Upper lobe of right lung (tissue), 1 donor: ENCODE measurements at regions of chr2 and their contacts with region 1.

Region 1: GRCh38 chr2:101823347-101823791 is 125.9 kb downstream of the MAP4K4 start:
- DNase-seq: no peak
- ATAC-seq: peak; percentile 93
- H3K4me3 ChIP-seq: no peak overlapping the region
- H3K27ac ChIP-seq: no peak overlapping the region
- H3K4me1 ChIP-seq: peaks cover 37% of the 10 kb centered on the region
- H3K27me3 ChIP-seq: no peaks in the 10 kb centered on the region
- CTCF ChIP-seq: peak; percentile 62

Region 2: DNA sequence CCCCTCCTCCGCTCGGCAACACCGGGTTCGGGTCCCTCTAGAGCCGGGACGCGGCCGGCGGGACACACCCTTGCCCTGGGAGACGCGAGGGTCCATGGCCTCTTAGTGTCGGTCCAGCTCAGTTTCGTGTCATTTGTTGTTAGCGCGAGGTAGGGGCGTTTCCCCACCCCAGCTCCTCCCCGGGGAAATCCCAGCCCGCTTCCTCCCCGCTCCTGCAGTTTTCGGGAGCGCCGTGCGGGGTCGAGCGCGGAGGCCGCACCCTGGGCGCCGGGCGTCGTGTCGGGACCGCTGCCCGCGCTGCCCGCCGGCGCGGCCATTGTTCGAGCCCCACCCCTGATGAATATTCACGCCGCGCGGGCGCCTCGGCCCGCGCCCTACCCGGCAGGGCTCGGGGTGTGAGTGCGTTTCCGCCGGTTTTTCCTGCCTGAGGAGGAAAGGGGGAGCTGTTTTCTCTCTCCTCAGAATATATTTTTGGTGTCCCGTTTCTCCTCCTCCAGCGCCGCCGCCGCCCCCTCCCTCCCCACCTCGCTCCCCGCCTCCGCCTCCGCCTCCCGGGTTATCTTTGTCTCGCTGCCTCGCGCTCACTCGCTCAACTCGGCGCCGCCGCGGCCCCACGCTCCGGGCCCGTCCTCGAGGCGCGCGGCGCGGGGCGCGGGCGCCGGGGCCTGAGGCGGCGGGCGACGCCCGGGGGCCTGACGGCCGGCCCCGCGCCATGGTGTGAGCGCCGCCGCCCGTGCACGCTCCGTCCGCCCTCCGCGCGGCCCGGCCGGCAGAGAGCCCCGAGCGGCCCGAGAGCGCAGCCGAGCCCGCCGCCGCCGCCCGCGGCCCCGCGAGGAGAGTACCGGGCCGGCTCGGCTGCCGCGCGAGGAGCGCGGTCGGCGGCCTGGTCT is 126.0 kb before region 1 on chr2 and contains the start of gene MAP4K4:
- intact Hi-C with region 1: loop called (anchors 10 kb)
- DNase-seq: peak; percentile 92
- ATAC-seq: peak; percentile 88
- H3K4me3 ChIP-seq: peak within 1 kb of the TSS; percentile 69
- H3K27ac ChIP-seq: peak within 1 kb of the TSS; percentile 86
- H3K4me1 ChIP-seq: peaks cover 19% of the 10 kb centered on the region
- H3K27me3 ChIP-seq: no peaks in the 10 kb centered on the region
- CTCF ChIP-seq: peak; percentile 32
- total RNA-seq, gene MAP4K4: 88.7 TPM